HepG2 (cell line): ENCODE measurements at regions of chr3 and their contacts with region 1.

Region 1: DNA sequence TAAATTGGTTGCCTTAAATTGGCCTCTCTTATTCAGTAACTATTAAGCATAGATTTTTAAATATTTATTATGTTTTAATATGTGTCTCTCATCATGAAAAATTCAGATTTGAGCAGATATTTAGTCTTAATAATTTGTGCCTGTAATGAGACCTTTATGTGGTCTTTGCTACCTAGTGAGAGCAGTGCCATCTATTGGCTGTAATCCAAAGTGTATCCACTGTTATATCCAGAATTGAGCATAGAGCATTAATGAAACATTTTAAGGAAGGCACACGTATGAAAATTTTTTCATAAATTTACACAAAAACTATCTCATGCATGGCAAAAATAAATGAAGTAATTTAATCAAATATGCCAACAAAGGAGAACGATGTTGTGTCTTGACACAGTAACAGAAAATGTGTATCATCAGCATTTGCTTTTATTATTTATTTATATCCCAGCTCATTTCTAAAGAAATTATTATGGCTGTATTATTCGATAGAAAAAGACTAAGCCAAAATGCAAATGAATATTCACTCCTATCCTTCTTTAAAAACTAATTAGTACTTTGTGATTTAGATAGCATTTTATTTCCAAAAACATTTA is 203.5 kb downstream of the RSRC1 start:
- DNase-seq: peak; percentile 31
- ATAC-seq: peak; percentile 66
- H3K4me3 ChIP-seq: no peak overlapping the region
- H3K27ac ChIP-seq: no peak overlapping the region
- H3K4me1 ChIP-seq: no peaks in the 10 kb centered on the region
- H3K27me3 ChIP-seq: no peaks in the 10 kb centered on the region
- CTCF ChIP-seq: peak; percentile 60
- EP300 ChIP-seq: no peak
- POLR2A ChIP-seq: no peak
- RAD21 ChIP-seq: no peak

Region 2: DNA sequence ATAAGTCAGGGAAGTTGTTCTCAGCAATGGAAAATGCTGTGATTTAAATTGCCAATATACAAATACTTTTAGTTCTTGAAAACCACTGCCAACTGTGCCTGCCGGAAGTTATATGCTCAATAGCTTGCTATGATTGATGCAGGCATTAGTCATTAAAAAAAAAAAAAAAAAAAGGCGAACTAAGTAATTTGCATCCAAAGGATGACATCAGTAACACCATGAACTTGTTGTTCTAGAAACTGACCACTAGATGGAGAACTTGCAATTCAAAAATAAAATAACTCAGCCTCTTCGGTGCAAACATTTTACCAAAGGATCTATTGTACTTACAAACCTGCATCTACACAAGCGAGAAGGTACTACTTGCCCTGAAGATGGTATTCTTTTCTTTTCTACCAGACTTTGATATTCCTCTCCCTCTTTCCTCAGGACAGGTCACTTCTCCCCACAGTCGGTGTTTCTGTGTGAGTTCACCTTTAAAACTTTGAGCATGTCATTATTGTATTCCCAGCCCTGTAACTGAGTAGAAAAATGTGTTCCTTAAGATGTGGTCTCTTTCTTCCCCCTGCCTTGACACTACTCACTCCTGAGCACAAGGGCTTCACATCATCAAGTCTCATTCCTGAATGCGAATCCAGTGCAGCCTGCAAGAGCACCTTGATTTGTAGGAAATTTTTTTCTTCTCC is 695.2 kb before region 1 on chr3:
- CTCF ChIA-PET with region 1: no interaction called
- POLR2A ChIA-PET with region 1: no interaction called
- in situ Hi-C with region 1: no loop called
- intact Hi-C with region 1: loop called (anchors 2 kb)
- DNase-seq: peak; percentile 41
- ATAC-seq: peak; percentile 46; the same call in 2 of the 3 replicates
- H3K4me3 ChIP-seq: no peak overlapping the region
- H3K27ac ChIP-seq: no peak overlapping the region
- H3K4me1 ChIP-seq: no peaks in the 10 kb centered on the region
- H3K27me3 ChIP-seq: no peaks in the 10 kb centered on the region; a peak in 2 of 5 replicates
- CTCF ChIP-seq: peak; percentile 63
- EP300 ChIP-seq: no peak
- POLR2A ChIP-seq: no peak
- RAD21 ChIP-seq: no peak

Region 3: DNA sequence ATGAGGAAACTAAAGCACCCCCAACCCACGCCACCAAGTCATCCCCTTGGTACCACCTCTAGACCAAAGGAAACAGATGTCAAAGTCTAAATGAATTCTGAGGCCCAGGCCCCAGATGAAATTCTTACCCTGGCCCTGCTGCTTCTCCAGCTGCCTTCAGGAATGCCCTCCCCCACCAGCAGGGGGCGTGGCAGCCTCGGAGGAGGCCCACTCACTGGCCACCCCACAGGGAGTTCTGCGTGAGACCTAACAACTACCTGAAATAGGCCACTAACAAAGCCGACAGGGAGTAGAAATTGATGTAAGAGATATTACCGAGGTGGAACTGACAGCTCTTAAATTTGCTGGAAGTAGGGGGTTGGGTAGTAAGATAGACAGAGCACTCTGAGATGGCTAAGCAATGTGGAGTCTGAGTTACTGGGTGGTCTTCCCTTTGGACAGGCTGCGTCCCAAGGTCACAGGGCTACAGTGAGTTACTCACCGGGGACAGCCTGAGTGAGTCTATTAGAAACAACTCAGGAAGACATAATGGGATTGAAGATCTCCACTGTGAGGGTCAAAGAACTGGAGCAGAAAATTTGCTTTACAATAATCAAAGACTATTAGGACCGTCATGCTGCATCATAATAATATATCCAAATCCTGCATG is 448.0 kb before region 1 on chr3:
- CTCF ChIA-PET with region 1: interaction called, 8 read pairs
- POLR2A ChIA-PET with region 1: no interaction called
- in situ Hi-C with region 1: loop called (anchors 10 kb)
- intact Hi-C with region 1: loop called (anchors 1 kb)
- DNase-seq: peak; percentile 2
- ATAC-seq: peak; percentile 97
- H3K4me3 ChIP-seq: no peak overlapping the region
- H3K27ac ChIP-seq: no peak overlapping the region
- H3K4me1 ChIP-seq: no peaks in the 10 kb centered on the region
- H3K27me3 ChIP-seq: no peaks in the 10 kb centered on the region; a peak in 1 of 5 replicates
- CTCF ChIP-seq: peak; percentile 85
- EP300 ChIP-seq: no peak
- POLR2A ChIP-seq: no peak
- RAD21 ChIP-seq: peak; percentile 63

Region 4: DNA sequence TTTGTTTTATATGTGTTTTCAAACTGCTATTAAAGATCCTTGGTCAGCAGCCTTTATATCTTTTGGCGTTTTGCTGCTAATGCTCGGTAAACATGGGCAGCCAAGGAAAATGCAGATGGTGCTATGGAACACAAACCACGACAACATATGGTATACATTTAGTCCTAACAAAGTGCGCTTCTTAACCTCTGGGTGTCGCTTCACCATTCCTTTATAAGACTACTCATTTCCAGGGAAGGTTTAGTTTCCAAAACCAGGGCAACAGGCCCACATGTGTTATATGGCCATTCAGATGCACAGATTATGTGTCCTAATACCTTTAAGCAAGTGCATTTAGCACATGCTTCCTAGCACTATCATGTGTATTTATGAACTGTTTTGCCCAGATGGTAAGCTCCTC is 221.9 kb before region 1 on chr3:
- CTCF ChIA-PET with region 1: interaction called, 6 read pairs
- POLR2A ChIA-PET with region 1: no interaction called
- in situ Hi-C with region 1: no loop called
- intact Hi-C with region 1: loop called (anchors 1 kb)
- DNase-seq: peak; percentile 15
- ATAC-seq: peak; percentile 75
- H3K4me3 ChIP-seq: no peak overlapping the region
- H3K27ac ChIP-seq: no peak overlapping the region
- H3K4me1 ChIP-seq: no peaks in the 10 kb centered on the region
- H3K27me3 ChIP-seq: peaks cover under 1 to 11% of the 10 kb centered on the region in 2 experiments; a peak in 2 of 5 replicates
- CTCF ChIP-seq: peak; percentile 60
- EP300 ChIP-seq: no peak
- POLR2A ChIP-seq: no peak
- RAD21 ChIP-seq: no peak

Region 5: DNA sequence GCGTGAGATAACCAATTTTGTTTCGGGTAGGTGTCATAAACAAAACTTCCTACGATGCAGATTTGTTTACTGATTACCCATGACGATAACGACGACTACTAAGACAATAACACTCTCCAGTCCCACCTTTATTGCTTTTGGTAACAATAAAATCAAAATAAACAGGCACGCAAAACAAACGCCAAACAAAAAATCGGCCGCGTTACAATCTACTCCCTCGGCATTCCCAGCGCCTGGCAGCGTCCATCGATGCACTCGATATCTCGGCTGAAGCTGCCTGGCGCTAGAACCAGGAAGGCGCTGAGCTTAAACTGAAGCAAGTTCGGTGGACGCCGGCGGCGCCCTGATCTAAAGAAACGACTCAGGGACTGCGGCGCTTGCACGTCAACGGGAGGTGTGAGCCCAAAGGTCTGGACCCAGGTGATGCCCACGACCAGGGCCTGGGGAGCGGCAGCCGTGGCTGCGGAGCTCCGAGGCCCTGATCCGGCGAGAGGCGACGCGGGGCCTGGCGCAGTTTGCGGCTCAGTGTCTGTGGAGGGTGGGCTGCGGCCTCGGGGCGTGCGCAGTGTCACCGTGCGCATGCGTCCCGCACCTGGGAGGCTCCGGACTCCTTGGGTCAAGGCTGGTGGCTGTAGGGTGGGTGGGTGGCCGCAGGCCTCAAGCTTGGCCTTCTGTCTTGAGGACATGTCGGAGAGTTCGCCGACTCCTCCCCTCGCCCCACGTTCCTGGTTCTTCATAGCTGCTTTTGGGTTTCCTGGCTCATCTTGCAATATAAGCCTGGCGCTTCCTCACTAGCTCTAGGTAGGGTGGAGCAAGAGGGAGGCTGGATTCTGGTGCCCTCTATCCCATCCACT is 203.4 kb before region 1 on chr3 and contains the start of gene RSRC1:
- CTCF ChIA-PET with region 1: no interaction called
- POLR2A ChIA-PET with region 1: no interaction called
- in situ Hi-C with region 1: no loop called
- intact Hi-C with region 1: loop called (anchors 5 kb)
- DNase-seq: peak; percentile 81
- ATAC-seq: peak; percentile 93
- H3K4me3 ChIP-seq: peak within 1 kb of the TSS; percentile 90 to 97 (median 90)
- H3K27ac ChIP-seq: peak within 1 kb of the TSS; percentile 95
- H3K4me1 ChIP-seq: peaks cover 52% of the 10 kb centered on the region
- H3K27me3 ChIP-seq: peaks cover 9 to 37% of the 10 kb centered on the region in 2 experiments; a peak in 4 of 5 replicates
- CTCF ChIP-seq: 0 out of 2 replicates have a peak, but pooled peaks have one; percentile 18
- EP300 ChIP-seq: no peak
- POLR2A ChIP-seq: peak; percentile 88 to 91
- RAD21 ChIP-seq: peak; percentile 21; the same call in 1 of the 2 replicates
- total RNA-seq, gene RSRC1: 63.0 and 71.9 TPM in 2 replicates

Region 6: DNA sequence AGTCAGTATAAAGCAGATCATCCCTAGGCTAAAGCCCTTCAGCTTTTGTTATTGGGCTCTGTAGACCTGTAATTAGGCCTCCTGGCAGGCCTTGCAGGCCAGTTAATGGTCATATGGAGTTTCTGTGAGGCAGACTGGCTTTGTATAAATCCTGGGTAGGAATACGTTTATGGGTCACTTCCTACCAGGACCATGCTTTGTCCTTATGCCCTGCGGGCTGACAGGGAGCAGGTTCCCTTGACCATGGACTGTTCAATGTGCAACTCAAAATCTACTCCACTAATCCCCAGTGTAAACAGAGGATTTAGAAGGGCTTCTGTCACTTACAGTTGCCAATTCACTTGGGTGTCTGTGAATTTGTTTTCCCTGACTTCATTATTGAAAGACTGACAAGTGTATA is 54.8 kb after region 1 on chr3:
- CTCF ChIA-PET with region 1: no interaction called
- POLR2A ChIA-PET with region 1: no interaction called
- in situ Hi-C with region 1: no loop called
- intact Hi-C with region 1: loop called (anchors 5 kb)
- DNase-seq: peak; percentile 91
- ATAC-seq: peak; percentile 100
- H3K4me3 ChIP-seq: peak overlapping the region in 1 of 3 experiments; percentile 24; a peak in 1 of 6 replicates
- H3K27ac ChIP-seq: peak overlapping the region; percentile 67
- H3K4me1 ChIP-seq: peaks cover 15% of the 10 kb centered on the region
- H3K27me3 ChIP-seq: no peaks in the 10 kb centered on the region
- CTCF ChIP-seq: no peak
- EP300 ChIP-seq: peak; percentile 73 to 94; a peak in 3 of 4 replicates
- POLR2A ChIP-seq: peak in 1 of 2 experiments; percentile 37; a peak in 1 of 4 replicates
- RAD21 ChIP-seq: no peak